HepG2 (cell line): ENCODE measurements at regions of chr16 and their contacts with region 1.

Region 1: GRCh38 chr16:66406534-66407221 is 20.4 kb upstream of the BEAN1 start:
- DNase-seq: peak; percentile 73
- ATAC-seq: peak; percentile 84
- H3K4me3 ChIP-seq: peak overlapping the region; percentile 47 to 76 (median 50)
- H3K27ac ChIP-seq: peak overlapping the region; percentile 94
- H3K4me1 ChIP-seq: peaks cover 50% of the 10 kb centered on the region
- H3K27me3 ChIP-seq: no peaks in the 10 kb centered on the region
- CTCF ChIP-seq: peak; percentile 99
- EP300 ChIP-seq: no peak; a peak in 1 of 4 replicates
- POLR2A ChIP-seq: 0 out of 4 replicates have a peak, but pooled peaks of 1 of the 2 experiments have one; percentile 44
- RAD21 ChIP-seq: peak; percentile 99

Region 2: GRCh38 chr16:66357153-66357928 is 49.3 kb before region 1 on chr16:
- CTCF ChIA-PET with region 1: no interaction called
- POLR2A ChIA-PET with region 1: no interaction called
- in situ Hi-C with region 1: no loop called
- intact Hi-C with region 1: no loop called
- DNase-seq: peak; percentile 61
- ATAC-seq: peak; percentile 71
- H3K4me3 ChIP-seq: no peak overlapping the region
- H3K27ac ChIP-seq: no peak overlapping the region
- H3K4me1 ChIP-seq: peaks cover 18% of the 10 kb centered on the region
- H3K27me3 ChIP-seq: peaks cover 5 to 50% of the 10 kb centered on the region in 2 experiments; a peak in 4 of 5 replicates
- CTCF ChIP-seq: peak; percentile 79
- EP300 ChIP-seq: no peak
- POLR2A ChIP-seq: no peak
- RAD21 ChIP-seq: no peak; the same call in 1 of the 2 replicates

Region 3: GRCh38 chr16:66391726-66392670 is 14.7 kb before region 1 on chr16:
- CTCF ChIA-PET with region 1: no interaction called
- POLR2A ChIA-PET with region 1: no interaction called
- in situ Hi-C with region 1: no loop called
- intact Hi-C with region 1: no loop called
- DNase-seq: no peak
- ATAC-seq: no peak
- H3K4me3 ChIP-seq: no peak overlapping the region
- H3K27ac ChIP-seq: no peak overlapping the region
- H3K4me1 ChIP-seq: peaks cover 24% of the 10 kb centered on the region
- H3K27me3 ChIP-seq: no peaks in the 10 kb centered on the region
- CTCF ChIP-seq: no peak
- EP300 ChIP-seq: no peak
- POLR2A ChIP-seq: no peak
- RAD21 ChIP-seq: no peak

Region 4: DNA sequence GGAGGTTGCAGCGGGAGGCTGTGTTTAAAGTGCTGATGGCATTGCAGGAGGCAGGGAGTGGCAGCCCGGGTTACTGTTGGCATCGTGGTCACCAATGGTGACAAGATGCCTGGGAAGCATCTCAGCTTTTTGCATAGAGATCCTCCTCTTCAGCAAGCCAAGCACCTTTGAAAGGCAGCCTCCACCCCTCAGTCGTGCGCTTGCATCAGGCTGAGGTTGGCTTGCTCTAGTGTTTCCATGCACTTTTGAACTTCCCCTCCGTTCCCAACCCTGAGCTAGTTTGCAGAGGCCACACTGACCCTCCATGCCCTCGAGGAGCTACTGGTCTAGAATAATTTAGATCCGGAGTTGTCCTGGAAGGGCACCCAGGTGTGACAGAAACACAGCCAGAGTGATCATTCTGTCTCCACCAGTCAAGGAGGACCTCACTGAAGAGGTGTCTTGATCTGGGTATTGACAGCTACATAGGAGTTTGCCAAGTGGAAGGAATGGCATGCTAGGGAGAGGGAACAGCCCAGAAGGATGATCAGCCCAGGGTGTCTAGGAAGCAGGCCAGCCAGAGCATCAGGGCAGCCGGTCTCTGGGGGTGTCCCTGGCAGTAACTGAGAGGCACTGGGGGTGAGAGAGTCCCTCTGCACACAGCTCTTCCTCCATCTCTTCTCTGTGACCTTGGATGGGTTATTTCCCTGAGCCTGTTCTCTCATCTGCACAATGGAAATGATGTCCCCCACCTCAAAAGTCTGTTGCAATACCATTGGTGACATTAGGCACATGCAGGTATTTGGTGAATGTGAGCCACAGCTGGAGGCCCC is 28.1 kb after region 1 on chr16:
- CTCF ChIA-PET with region 1: no interaction called
- POLR2A ChIA-PET with region 1: interaction called, 48 read pairs
- in situ Hi-C with region 1: no loop called
- intact Hi-C with region 1: no loop called
- DNase-seq: peak; percentile 92
- ATAC-seq: peak; percentile 80
- H3K4me3 ChIP-seq: peak overlapping the region in 2 of 3 experiments; percentile 0 to 47; a peak in 2 of 6 replicates
- H3K27ac ChIP-seq: peak overlapping the region; percentile 85
- H3K4me1 ChIP-seq: peaks cover 53% of the 10 kb centered on the region
- H3K27me3 ChIP-seq: no peaks in the 10 kb centered on the region
- CTCF ChIP-seq: peak; percentile 17; the same call in 1 of the 2 replicates
- EP300 ChIP-seq: peak; percentile 40 to 62; a peak in 3 of 4 replicates
- POLR2A ChIP-seq: 0 out of 4 replicates have a peak, but pooled peaks of 1 of the 2 experiments have one; percentile 40
- RAD21 ChIP-seq: no peak

Region 5: DNA sequence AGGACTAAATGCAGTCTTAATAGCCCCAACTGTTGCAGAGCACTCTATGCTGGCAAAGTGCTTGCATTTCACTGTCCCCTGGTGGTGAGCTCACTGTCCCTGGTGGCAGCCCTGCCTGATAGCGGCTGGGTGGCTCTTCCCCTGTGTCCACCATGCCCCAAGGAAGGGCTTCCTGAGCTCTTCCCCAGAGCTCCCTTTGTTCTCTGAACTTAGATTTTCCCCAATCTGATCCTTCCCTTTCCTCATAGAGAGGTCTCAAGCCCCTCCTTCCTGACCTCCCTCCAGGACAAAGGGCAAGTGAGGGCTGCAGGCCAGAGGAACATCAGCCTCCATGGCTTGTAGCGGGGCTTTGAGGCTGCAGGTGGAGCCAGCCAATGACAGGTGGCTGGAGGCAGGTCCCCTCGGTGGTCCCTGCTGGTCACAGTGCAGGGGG is 37.4 kb after region 1 on chr16:
- CTCF ChIA-PET with region 1: interaction called, 11 read pairs
- POLR2A ChIA-PET with region 1: no interaction called
- in situ Hi-C with region 1: loop called (anchors 5 kb)
- intact Hi-C with region 1: loop called (anchors 1 kb)
- DNase-seq: peak; percentile 55
- ATAC-seq: peak; percentile 98
- H3K4me3 ChIP-seq: no peak overlapping the region
- H3K27ac ChIP-seq: no peak overlapping the region
- H3K4me1 ChIP-seq: peaks cover 10% of the 10 kb centered on the region
- H3K27me3 ChIP-seq: peaks cover 0 to 3% of the 10 kb centered on the region in 2 experiments; a peak in 3 of 5 replicates
- CTCF ChIP-seq: peak; percentile 84
- EP300 ChIP-seq: no peak
- POLR2A ChIP-seq: no peak
- RAD21 ChIP-seq: peak; percentile 71

Region 6: GRCh38 chr16:66588981-66589713 is 182.5 kb after region 1 on chr16:
- CTCF ChIA-PET with region 1: interaction called, 6 read pairs
- POLR2A ChIA-PET with region 1: no interaction called
- in situ Hi-C with region 1: loop called (anchors 5 kb)
- intact Hi-C with region 1: loop called (anchors 5 kb)
- DNase-seq: peak; percentile 55
- ATAC-seq: peak; percentile 95
- H3K4me3 ChIP-seq: no peak overlapping the region
- H3K27ac ChIP-seq: no peak overlapping the region
- H3K4me1 ChIP-seq: peaks cover 9% of the 10 kb centered on the region; the same call in 1 of the 2 replicates
- H3K27me3 ChIP-seq: peaks cover 3 to 28% of the 10 kb centered on the region in 2 experiments; a peak in 4 of 5 replicates
- CTCF ChIP-seq: peak; percentile 84
- EP300 ChIP-seq: no peak
- POLR2A ChIP-seq: no peak
- RAD21 ChIP-seq: peak; percentile 79